ENCODE measurements at regions of chr17 and their contacts with region 1.

Region 1: DNA sequence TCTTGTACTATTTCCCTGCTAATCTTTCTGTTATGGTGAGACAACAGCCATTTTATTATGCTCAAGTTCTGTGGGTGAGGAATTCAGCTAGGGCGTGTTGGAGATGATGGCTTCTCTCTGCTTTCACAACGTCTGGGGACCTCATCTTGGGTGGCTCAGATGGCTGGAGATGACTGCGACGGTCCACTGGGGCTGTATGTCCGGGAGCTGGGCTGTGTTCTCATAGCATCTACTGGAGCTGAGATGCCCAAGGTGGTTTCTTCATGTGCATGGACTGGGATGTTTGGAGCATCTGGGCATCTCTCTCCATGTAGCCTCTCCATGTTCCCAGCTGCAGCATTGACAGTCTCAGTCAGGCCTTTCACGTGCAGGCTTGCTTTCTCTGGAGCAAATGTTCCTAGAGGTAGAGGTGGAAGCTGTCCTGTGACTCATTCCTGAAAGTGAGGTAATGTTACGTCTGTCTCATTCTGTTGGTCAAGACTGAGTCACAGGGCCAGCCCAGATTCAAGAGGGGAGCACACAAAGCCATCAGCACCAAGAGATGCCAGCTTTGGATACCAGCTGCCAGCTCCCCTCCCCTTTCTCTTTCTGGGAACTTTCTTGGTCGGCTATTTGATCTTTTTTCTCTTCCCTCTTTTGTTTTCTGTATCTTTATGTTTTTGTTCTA is 96.2 kb downstream of the RAP1GAP2 start:
- DNase-seq: peak; percentile 98
- H3K4me3 Mint-ChIP-seq: no peak overlapping the region
- H3K27ac Mint-ChIP-seq: peak overlapping the region; percentile 21
- H3K4me1 Mint-ChIP-seq: peaks cover 32% of the 10 kb centered on the region
- H3K27me3 Mint-ChIP-seq: no peaks in the 10 kb centered on the region
- CTCF ChIP-seq: no peak

Region 2: DNA sequence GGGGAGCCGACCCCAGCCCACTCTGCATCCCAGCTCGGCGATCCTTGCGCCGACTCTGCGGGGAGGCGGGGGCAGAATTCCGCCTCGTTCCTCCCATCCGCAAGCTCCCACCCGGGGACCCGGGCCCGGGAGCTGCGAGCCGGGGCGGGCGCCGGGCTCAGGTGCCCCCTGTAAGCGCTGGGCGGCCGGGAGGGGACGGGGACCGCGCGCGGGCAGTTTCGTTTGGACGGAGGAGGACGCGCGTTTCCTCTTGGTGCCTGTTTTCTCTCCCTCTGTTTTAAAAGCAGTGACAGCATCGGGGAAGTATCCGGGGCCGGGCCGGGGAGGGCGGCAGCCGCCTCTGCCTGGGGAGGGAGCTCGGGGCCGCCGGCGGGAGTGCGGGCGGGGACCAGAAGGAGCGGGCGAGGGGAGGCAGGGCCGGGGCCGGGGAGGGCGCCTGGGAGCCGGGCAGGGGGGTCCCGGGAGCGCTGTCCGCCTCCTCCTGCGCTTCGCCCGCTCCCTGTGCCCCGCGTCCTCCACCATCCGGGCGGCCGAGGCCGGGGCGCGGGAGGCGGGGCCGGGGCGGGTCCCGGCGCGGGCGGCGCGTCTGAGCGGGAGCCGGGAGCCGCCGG is 39.2 kb before region 1 on chr17:
- CTCF ChIA-PET with region 1: interaction called, 20 read pairs
- POLR2A ChIA-PET with region 1: interaction called, 8 read pairs
- intact Hi-C with region 1: loop called (anchors 2 kb)
- DNase-seq: peak; percentile 15
- H3K4me3 Mint-ChIP-seq: peak overlapping the region; percentile 78
- H3K27ac Mint-ChIP-seq: no peak overlapping the region
- H3K4me1 Mint-ChIP-seq: peaks cover 15% of the 10 kb centered on the region
- H3K27me3 Mint-ChIP-seq: no peaks in the 10 kb centered on the region
- CTCF ChIP-seq: no peak

Region 3: DNA sequence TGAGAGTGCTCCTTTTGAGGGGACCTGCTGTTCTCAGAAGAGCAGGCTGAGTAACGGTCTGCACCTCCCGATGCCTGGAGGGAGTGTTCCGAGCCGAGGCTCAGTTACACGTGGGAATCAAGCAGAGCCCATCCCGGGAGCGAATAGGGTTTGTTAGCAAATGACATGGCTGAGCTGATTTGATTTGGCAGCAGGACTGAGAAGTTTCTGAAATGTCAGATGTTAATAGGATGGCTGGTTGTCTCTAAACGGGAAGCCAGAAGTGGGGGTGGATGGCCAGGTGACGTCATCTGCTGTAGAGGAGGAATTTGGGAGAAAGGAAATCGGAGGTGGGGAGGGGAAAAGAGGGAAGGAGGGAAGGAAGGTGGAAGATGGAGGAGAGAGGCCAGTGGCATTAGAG is 31.8 kb after region 1 on chr17:
- CTCF ChIA-PET with region 1: interaction called, 5 read pairs
- POLR2A ChIA-PET with region 1: interaction called, 30 read pairs
- intact Hi-C with region 1: loop called (anchors 2 kb)
- DNase-seq: peak; percentile 56
- H3K4me3 Mint-ChIP-seq: no peak overlapping the region
- H3K27ac Mint-ChIP-seq: peak overlapping the region; percentile 97
- H3K4me1 Mint-ChIP-seq: peaks cover 26% of the 10 kb centered on the region
- H3K27me3 Mint-ChIP-seq: no peaks in the 10 kb centered on the region
- CTCF ChIP-seq: no peak

Region 4: GRCh38 chr17:2954898-2955445 is 62.5 kb after region 1 on chr17:
- CTCF ChIA-PET with region 1: no interaction called
- POLR2A ChIA-PET with region 1: interaction called, 5 read pairs
- intact Hi-C with region 1: loop called (anchors 2 kb)
- DNase-seq: peak; percentile 94
- H3K4me3 Mint-ChIP-seq: peak overlapping the region; percentile 73
- H3K27ac Mint-ChIP-seq: peak overlapping the region; percentile 93
- H3K4me1 Mint-ChIP-seq: peaks cover 50% of the 10 kb centered on the region
- H3K27me3 Mint-ChIP-seq: no peaks in the 10 kb centered on the region
- CTCF ChIP-seq: no peak

Region 5: GRCh38 chr17:3043737-3044365 is 151.4 kb after region 1 on chr17:
- CTCF ChIA-PET with region 1: no interaction called
- POLR2A ChIA-PET with region 1: no interaction called
- intact Hi-C with region 1: no loop called
- DNase-seq: no peak
- H3K4me3 Mint-ChIP-seq: no peak overlapping the region
- H3K27ac Mint-ChIP-seq: no peak overlapping the region
- H3K4me1 Mint-ChIP-seq: no peaks in the 10 kb centered on the region
- H3K27me3 Mint-ChIP-seq: peaks cover 7% of the 10 kb centered on the region
- CTCF ChIP-seq: peak; percentile 22

Measured in MCF 10A (cell line).